ENCODE measurements at regions of chr6 and their contacts with region 1.

Region 1: DNA sequence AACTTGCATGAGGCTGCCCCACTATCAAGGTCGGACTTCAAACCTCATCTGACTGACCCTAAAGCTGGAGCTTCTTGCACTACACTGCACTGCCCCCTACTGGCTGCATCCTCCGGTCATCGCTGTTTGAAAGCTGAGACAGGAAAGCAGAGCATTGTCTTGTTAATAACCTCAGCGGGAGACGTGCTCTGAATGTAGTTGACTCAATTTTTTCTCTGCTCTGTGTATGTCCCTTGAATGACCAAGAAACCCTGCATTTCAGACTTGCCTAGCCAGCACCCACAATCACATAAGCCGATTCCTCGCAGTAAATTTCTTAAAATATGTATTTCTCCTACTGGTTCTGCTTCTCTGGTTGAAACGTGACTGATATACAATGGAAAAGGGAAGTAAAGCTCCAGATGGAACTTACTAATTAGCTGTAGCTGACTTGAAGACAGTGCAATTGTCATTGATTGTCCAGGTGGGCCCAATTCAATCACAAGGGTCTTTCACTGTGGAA is 27.8 kb downstream of the TCF21 start:
- DNase-seq: peak; percentile 63
- H3K4me3 ChIP-seq: no peak overlapping the region
- H3K27ac ChIP-seq: no peak overlapping the region
- H3K4me1 ChIP-seq: no peaks in the 10 kb centered on the region
- H3K27me3 ChIP-seq: no peaks in the 10 kb centered on the region
- CTCF ChIP-seq: peak; percentile 93 to 96

Region 2: DNA sequence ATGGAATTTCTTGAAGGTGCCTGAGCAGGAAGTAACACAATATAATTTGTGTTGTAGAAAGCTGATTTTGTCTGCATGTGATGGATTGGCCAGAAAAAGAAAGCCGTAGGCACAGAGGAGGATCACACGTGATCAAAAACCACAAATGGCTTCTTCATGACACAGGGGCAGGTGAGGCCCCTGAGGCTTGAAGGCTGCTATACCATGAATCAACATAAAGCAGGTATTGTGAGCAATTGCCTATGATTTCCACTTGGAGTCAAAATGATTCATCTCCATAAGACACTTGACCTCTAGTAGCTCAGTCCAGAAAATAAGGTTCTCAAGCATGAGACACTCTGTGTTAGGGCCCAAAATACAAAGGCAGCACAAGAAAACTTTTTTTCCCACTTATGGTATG is 718.0 kb before region 1 on chr6:
- CTCF ChIA-PET with region 1: no interaction called
- dilution Hi-C with region 1: no loop called
- in situ Hi-C with region 1: no loop called
- intact Hi-C with region 1: loop called (anchors 10 kb)
- DNase-seq: peak; percentile 88
- H3K4me3 ChIP-seq: no peak overlapping the region
- H3K27ac ChIP-seq: no peak overlapping the region
- H3K4me1 ChIP-seq: peaks cover 4% of the 10 kb centered on the region
- H3K27me3 ChIP-seq: peaks cover 4% of the 10 kb centered on the region
- CTCF ChIP-seq: no peak